ENCODE measurements at regions of chr1 and their contacts with region 1.

Region 1: GRCh38 chr1:26811057-26811456 is 15.4 kb upstream of the ZDHHC18 start:
- DNase-seq: no peak
- H3K4me3 Mint-ChIP-seq: no peak overlapping the region
- H3K27ac Mint-ChIP-seq: no peak overlapping the region
- H3K4me1 Mint-ChIP-seq: peaks cover 28% of the 10 kb centered on the region
- H3K27me3 Mint-ChIP-seq: no peaks in the 10 kb centered on the region

Region 2: DNA sequence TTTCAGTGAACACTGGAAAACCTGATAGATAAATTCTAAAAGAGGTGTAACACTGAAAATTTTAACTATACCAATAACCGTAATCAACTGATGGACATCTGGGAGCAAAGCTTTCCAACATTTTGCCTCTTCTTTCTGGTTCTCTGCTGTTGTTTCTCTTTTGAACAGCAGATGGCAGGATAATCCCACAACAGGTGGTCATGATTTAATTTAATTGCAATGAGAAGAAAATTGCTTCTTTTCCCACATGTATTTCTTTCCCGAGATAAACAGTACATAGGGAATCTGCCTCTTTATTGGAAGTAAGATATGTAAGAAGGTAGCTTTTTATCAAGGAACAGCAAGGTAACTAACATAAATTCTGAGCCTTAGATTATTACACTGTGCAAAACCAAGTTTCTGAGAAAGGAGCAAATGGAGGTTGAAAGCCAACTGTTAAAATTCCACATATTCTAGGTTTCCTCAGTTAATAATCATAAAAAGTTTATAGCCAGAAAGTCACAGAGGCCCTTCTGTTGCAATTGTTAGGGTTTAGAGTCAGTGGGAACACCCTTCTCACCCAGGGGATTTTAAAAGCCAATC is 208.6 kb before region 1 on chr1:
- intact Hi-C with region 1: loop called (anchors 1 kb)
- DNase-seq: peak; percentile 36
- H3K4me3 Mint-ChIP-seq: no peak overlapping the region
- H3K27ac Mint-ChIP-seq: no peak overlapping the region
- H3K4me1 Mint-ChIP-seq: peaks cover 15% of the 10 kb centered on the region
- H3K27me3 Mint-ChIP-seq: peaks cover 4% of the 10 kb centered on the region

Region 3: GRCh38 chr1:26799479-26800142 is 11.4 kb before region 1 on chr1:
- intact Hi-C with region 1: loop called (anchors 1 kb)
- DNase-seq: no peak
- H3K4me3 Mint-ChIP-seq: peak overlapping the region; percentile 55
- H3K27ac Mint-ChIP-seq: peak overlapping the region; percentile 79
- H3K4me1 Mint-ChIP-seq: peaks cover 53% of the 10 kb centered on the region
- H3K27me3 Mint-ChIP-seq: no peaks in the 10 kb centered on the region

Region 4: GRCh38 chr1:26826261-26827105 is 15.4 kb after region 1 on chr1 and contains the start of gene ZDHHC18:
- intact Hi-C with region 1: loop called (anchors 1 kb)
- DNase-seq: peak; percentile 74
- H3K4me3 Mint-ChIP-seq: peak within 1 kb of the TSS; percentile 98
- H3K27ac Mint-ChIP-seq: peak within 1 kb of the TSS; percentile 97
- H3K4me1 Mint-ChIP-seq: peaks cover 63% of the 10 kb centered on the region
- H3K27me3 Mint-ChIP-seq: no peaks in the 10 kb centered on the region
- total RNA-seq, gene ZDHHC18: 87.3 and 94.4 TPM in 2 replicates

Region 5: DNA sequence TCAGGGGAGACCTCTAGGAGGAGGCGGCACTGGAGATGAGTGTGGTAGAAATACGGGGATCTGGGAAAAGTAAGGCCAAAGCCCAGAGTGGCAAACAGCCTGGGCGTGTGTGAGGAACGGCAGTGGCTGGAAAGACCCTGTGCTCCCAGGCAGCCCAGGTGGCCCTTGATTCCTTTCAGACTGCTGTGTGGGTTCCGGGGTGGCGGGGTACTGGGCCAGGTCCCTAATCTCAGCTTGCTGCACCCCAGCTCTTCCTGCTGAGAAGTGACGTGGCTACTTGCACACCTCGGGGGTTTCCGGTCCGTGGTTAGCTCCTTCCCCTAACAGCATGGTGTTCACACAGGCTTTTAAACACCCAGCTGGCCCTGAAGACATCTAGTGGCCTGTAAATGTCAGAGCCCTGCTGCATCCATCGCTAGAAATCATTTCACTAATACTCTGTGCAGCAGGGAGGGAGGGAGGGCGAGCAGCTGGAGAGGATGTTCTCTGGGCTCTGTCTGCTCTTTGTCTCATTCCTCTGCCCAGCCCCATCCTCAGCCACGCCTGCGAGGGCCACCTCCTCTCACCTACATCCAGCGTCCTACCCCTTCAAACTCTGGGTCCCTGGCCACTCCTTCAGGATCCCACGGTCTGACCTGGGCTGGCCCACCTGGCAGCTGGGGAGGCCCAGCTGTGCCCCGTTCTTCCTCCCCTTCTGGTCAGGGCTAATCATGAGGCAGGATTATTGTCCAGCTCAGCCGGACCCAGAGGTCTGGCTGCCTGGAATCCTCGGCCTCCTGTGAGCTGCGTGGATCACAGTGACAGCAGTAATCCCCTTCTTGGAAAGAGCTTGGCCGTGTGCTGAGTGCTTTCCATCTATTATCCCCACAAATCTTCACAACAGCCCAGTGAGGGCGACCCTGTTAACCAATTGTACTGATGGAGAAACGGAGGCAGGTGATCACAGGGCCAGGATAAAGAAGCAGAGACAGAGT is 22.7 kb after region 1 on chr1:
- intact Hi-C with region 1: loop called (anchors 1 kb)
- DNase-seq: peak; percentile 89
- H3K4me3 Mint-ChIP-seq: peak overlapping the region; percentile 75
- H3K27ac Mint-ChIP-seq: peak overlapping the region; percentile 99
- H3K4me1 Mint-ChIP-seq: peaks cover 69% of the 10 kb centered on the region
- H3K27me3 Mint-ChIP-seq: no peaks in the 10 kb centered on the region

Region 6: DNA sequence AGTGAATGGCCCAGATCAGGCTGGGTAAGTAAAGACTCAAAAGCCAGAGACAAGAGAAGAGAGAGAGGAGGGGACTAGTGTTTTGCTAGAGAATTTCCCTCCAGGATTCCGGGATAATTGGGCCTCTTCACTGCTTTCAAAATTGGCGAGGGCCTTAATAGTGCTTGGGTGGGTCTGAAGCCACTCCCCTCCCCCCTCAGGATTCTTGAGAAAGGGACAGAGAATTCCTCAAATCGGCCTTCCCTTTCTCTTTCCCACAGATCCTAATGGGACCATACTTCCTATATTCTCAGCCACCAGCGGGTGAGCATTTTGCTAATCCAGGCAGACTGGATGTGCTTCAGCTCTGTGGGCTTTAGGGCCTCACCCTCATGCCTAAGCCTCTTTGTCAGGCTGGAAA is 63.8 kb after region 1 on chr1:
- intact Hi-C with region 1: loop called (anchors 1 kb)
- DNase-seq: no peak
- H3K4me3 Mint-ChIP-seq: no peak overlapping the region
- H3K27ac Mint-ChIP-seq: no peak overlapping the region
- H3K4me1 Mint-ChIP-seq: no peaks in the 10 kb centered on the region
- H3K27me3 Mint-ChIP-seq: no peaks in the 10 kb centered on the region

Region 7: DNA sequence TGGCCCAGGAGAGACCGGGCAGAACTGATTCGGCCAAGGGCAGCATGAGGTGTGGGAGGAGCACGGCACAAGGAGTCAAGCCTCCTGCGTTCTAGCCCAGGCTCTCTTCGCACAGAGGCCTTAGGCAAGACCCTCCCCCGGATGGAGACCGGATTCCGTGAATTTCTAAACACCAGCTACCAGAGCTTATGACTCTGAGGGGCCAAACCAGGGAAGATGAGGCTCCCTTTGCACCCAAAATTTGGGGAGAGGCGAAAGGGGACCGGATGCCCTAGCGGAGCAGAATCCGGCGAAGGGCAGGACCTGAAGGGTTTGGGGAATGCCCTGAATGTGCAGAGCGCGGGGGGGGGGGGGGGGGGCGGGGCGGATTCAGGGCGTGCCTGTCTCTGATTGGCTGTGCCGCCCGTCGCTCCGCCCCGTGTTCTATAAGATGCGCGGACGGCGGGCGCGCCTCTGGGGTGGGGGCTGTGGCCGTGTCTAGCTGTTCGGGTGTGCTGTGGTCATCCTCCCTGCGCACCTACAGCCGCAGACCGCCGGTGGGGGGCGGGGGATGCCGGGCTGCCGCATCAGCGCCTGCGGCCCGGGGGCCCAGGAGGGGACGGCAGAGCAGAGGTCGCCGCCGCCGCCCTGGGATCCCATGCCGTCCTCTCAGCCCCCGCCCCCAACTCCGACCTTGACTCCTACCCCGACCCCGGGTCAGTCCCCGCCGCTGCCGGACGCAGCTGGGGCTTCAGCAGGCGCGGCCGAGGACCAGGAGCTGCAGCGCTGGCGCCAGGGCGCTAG is 182.4 kb after region 1 on chr1 and contains the start of gene TRNP1:
- intact Hi-C with region 1: no loop called
- DNase-seq: peak; percentile 69
- H3K4me3 Mint-ChIP-seq: peak within 1 kb of the TSS; percentile 81
- H3K27ac Mint-ChIP-seq: peak within 1 kb of the TSS; percentile 21
- H3K4me1 Mint-ChIP-seq: peaks cover 21% of the 10 kb centered on the region
- H3K27me3 Mint-ChIP-seq: peaks cover 55% of the 10 kb centered on the region
- total RNA-seq, gene TRNP1: 2.0 TPM in 2 replicates